ENCODE measurements at regions of chr1 and their contacts with region 1.

Region 1: DNA sequence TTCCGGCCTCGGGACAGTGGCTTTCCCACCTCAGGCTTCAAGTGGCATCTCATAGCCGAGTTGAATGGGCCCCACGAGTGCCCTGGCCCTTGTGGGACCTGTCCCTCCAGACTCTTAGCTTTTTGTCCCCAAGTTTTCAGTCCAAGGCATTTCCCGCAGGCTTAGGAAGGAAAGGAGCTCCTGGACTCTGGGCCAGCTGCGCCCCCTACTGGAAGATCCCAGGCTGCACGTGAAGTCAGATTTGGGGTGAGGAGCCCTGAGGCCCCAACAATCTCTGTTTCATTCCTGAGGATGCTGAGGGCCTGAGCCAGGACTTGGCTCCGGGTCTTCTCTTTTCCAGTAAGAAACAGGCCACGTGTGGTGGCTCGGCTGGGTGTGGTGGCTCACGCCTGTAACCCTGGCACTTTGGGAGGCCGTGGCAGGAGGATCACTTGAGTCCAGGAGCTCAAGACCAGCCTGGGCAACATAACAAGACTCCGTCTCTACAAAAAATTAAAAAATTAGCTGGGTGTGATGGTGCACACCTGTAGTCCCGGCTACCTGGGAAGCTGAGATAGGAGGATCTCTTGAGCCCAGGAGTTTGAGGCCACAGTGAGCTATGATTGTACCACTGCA is 67.4 kb downstream of the ARHGEF10L start:
- H3K4me3 ChIP-seq: no peak overlapping the region
- H3K27ac ChIP-seq: no peak overlapping the region
- H3K4me1 ChIP-seq: no peaks in the 10 kb centered on the region
- CTCF ChIP-seq: peak; percentile 65

Region 2: DNA sequence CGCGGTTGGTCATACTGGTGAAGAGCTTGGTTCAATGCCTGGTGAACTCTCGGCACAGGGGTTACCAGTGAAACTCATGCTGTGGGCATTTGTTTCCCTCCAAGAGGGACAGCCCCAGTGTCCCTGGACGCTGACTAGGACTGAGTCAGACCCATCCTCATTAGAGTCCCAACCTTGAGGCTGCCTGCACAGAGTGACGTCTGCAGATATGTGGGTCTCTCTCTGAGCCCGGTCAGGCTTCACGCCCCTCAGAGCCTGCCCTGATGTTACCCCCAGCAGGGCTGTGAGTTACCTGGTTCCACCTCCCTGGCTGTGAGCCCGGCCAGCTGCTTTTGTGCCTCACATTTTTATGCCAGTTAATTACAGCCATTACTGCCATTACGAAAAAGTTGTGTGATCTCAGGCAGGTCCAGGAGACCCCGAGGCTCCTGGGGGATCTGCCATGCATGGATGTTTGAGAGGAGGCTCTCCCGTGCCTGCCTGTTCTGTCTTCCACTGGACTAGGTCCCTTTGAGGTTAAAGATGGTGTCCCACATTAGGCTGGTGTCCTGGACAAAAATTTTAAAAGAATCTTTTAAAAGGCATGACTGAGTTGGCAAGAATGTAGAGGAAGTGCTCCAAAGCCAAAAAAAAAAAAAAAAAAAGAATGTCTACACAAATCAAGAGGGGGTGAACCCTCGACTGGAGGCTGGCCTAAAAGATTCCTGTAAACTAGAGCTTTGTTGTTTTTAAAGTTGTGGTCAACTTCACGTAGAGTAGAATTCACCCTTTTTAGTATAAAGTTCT is 438.6 kb before region 1 on chr1:
- CTCF ChIA-PET with region 1: no interaction called
- POLR2A ChIA-PET with region 1: no interaction called
- H3K4me3 ChIP-seq: no peak overlapping the region
- H3K27ac ChIP-seq: no peak overlapping the region
- H3K4me1 ChIP-seq: no peaks in the 10 kb centered on the region
- CTCF ChIP-seq: no peak

Region 3: DNA sequence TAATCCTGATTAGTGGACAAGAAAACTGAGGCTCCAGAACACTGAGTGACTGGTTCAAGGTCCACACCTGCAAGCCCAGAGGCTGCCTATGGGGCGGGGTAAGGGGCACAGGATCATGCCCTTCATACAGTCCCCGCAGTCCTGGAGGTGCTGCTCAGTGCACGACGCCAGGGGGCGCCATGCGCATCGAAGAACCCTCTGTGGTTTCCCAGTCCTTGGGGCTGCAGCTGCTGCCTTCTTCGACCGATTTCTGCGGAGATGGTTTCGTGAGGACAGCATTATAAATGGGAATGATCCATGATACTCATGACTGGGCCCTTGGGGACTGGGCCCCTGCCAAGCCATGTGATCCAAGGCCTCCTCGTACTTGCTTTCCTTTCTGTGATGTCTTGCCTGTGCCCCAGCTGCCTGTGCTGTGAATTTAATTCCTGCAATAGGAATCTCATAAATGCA is 104.6 kb before region 1 on chr1:
- CTCF ChIA-PET with region 1: interaction called, 250 read pairs
- POLR2A ChIA-PET with region 1: interaction called, 3 read pairs
- H3K4me3 ChIP-seq: no peak overlapping the region
- H3K27ac ChIP-seq: no peak overlapping the region
- H3K4me1 ChIP-seq: no peaks in the 10 kb centered on the region
- CTCF ChIP-seq: peak; percentile 66

Region 4: DNA sequence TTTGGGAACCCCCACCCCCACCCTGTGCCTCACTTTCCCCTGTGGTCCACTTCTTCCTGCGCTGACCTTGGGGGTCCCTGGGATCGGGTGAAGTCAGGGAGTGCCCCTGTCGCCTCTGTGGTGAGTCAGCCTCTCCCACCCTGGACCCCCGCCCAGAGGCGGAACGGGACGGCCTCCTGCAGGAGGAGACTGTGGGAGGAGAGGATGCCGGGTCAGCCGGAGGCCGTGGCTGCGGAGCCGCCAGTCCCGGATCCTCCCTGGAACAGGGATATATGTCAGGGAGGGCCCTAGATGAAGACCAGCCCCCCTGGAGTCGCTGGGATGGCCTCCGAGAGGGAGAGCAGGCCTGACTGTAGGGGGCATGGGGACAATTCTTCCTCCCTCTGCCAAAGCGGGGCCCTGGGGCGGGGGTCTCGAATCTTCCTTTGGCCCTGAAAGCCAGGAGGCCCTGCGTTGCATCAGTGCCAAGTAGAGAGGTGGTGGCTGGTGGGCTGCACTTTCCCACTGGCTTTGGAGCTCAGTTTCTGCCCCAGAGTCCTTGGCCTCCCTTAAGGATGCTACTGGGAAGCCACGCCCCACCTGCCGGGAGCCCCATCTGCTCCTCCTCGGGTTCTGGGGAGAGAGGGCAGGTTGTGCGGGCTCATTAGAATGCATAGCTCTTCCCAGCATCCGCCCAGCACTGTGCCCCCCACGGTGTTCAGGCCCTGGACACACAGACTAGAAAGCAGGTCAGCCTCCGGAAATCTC is 66.5 kb before region 1 on chr1:
- CTCF ChIA-PET with region 1: interaction called, 18 read pairs
- POLR2A ChIA-PET with region 1: interaction called, 6 read pairs
- H3K4me3 ChIP-seq: peak overlapping the region; percentile 69
- H3K27ac ChIP-seq: peak overlapping the region; percentile 87
- H3K4me1 ChIP-seq: peaks cover 9% of the 10 kb centered on the region
- CTCF ChIP-seq: no peak; the same call in 1 of the 2 replicates

Region 5: GRCh38 chr1:17574516-17574915 is 32.4 kb before region 1 on chr1:
- CTCF ChIA-PET with region 1: interaction called, 48 read pairs
- POLR2A ChIA-PET with region 1: no interaction called
- H3K4me3 ChIP-seq: no peak overlapping the region
- H3K27ac ChIP-seq: no peak overlapping the region
- H3K4me1 ChIP-seq: no peaks in the 10 kb centered on the region
- CTCF ChIP-seq: peak; percentile 61; the same call in 1 of the 2 replicates

Region 6: DNA sequence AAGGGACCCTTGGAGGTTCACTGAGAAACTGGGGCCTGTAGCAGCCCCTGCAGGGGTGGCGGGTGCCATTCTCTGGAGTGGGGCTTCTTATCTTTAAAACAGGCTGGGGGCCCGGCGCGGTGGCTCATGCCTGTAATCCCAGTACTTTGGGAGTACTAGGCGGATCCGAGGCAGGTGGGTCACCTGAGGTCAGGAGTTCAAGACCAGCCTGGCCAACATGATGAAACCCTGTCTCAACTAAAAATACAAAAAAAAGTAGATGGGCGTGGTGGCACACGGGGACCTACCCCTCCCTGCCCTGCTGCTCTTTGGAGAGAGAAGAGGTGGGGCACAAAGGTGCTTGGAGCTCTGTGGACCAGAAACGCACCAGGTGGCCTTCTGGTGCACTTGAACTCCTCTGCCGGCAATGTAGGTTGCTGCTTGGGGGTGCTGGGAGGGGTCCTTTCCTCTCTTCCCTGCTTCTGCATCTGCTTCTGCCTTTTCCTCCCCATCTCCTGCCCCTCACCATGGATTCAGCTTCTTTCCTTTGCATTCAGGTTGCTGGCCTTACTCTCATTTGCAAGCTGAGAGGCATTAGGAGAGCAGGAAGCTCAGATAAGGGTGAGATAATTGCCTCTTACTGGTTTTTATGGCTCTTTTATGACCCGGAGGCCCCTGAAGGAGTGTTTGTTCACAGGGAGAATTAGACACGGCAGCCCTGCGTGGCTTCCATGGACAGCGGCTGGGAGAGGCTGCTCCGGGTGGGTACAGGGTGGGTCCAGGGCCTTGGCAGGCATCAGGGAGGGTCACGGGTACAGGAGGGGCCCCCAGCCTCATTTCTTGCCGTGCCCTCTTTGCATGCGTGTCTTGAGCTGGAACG is 10.1 kb before region 1 on chr1:
- CTCF ChIA-PET with region 1: interaction called, 33 read pairs
- POLR2A ChIA-PET with region 1: no interaction called
- H3K4me3 ChIP-seq: no peak overlapping the region
- H3K27ac ChIP-seq: peak overlapping the region; percentile 80
- H3K4me1 ChIP-seq: peaks cover 24% of the 10 kb centered on the region
- CTCF ChIP-seq: no peak

Region 7: GRCh38 chr1:17719874-17720273 is 112.9 kb after region 1 on chr1:
- CTCF ChIA-PET with region 1: no interaction called
- POLR2A ChIA-PET with region 1: no interaction called
- H3K4me3 ChIP-seq: no peak overlapping the region
- H3K27ac ChIP-seq: no peak overlapping the region
- H3K4me1 ChIP-seq: no peaks in the 10 kb centered on the region; the same call in 1 of the 2 replicates
- CTCF ChIP-seq: no peak

Region 8: GRCh38 chr1:18279351-18280074 is 672.6 kb after region 1 on chr1:
- CTCF ChIA-PET with region 1: no interaction called
- POLR2A ChIA-PET with region 1: no interaction called
- H3K4me3 ChIP-seq: no peak overlapping the region
- H3K27ac ChIP-seq: no peak overlapping the region
- H3K4me1 ChIP-seq: no peaks in the 10 kb centered on the region
- CTCF ChIP-seq: no peak